ENCODE measurements at regions of chrX and their contacts with region 1.

Region 1: GRCh38 chrX:140057001-140057411 is 91.7 kb upstream of the CXorf66 start:
- DNase-seq: peak; percentile 76 to 89
- ATAC-seq: peak; percentile 80
- H3K4me3 ChIP-seq: no peak overlapping the region
- H3K27ac ChIP-seq: no peak overlapping the region
- H3K4me1 ChIP-seq: no peaks in the 10 kb centered on the region
- H3K27me3 ChIP-seq: no peaks in the 10 kb centered on the region

Region 2: GRCh38 chrX:139831675-139832456 is 225.1 kb before region 1 on chrX:
- intact Hi-C with region 1: no loop called
- DNase-seq: no peak
- ATAC-seq: no peak
- H3K4me3 ChIP-seq: no peak overlapping the region
- H3K27ac ChIP-seq: no peak overlapping the region
- H3K4me1 ChIP-seq: peaks cover 0 to 2% of the 10 kb centered on the region in 2 donors
- H3K27me3 ChIP-seq: no peaks in the 10 kb centered on the region

Region 3: DNA sequence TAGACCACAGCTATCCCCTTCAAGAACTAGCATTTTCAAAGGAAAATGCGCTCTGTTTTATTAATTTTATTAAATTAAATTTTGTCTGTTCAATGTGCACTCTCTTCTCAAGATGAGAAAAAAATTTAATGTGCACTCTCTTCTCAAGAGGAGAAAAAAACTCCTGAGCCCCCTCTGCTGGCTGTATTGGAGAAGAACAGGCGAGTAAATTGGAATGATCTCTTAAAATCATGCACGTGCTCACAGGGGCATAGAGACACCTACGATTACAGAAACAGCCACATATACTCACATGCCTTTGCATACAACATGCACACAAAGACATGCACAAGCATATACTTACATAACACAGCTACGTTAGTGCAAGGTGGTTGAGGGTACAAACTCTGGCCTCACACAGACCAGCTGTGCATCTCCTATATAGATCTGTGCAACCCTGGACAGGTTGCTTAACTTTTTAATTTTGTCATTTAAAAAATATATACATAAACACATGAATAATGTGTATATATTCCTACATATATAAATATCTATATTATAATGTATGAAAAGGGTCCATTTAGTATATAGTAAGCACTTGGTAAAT is 84.5 kb after region 1 on chrX:
- intact Hi-C with region 1: loop called (anchors 2 to 5 kb)
- DNase-seq: no peak
- ATAC-seq: no peak
- H3K4me3 ChIP-seq: no peak overlapping the region
- H3K27ac ChIP-seq: no peak overlapping the region
- H3K4me1 ChIP-seq: no peaks in the 10 kb centered on the region
- H3K27me3 ChIP-seq: no peaks in the 10 kb centered on the region